PC-3 (cell line): ENCODE measurements at regions of chr1 and their contacts with region 1.

Region 1: GRCh38 chr1:45205910-45206721 is at the start of gene ZSWIM5:
- DNase-seq: peak; percentile 78
- ATAC-seq: peak; percentile 73
- H3K4me3 ChIP-seq: peak within 1 kb of the TSS; percentile 91
- H3K27ac ChIP-seq: no peak within 1 kb of the TSS
- H3K4me1 ChIP-seq: peaks cover 16% of the 10 kb centered on the region
- H3K27me3 ChIP-seq: no peaks in the 10 kb centered on the region
- CTCF ChIP-seq: no peak
- total RNA-seq, gene ZSWIM5: 1.4 and 1.6 TPM in 2 replicates

Region 2: DNA sequence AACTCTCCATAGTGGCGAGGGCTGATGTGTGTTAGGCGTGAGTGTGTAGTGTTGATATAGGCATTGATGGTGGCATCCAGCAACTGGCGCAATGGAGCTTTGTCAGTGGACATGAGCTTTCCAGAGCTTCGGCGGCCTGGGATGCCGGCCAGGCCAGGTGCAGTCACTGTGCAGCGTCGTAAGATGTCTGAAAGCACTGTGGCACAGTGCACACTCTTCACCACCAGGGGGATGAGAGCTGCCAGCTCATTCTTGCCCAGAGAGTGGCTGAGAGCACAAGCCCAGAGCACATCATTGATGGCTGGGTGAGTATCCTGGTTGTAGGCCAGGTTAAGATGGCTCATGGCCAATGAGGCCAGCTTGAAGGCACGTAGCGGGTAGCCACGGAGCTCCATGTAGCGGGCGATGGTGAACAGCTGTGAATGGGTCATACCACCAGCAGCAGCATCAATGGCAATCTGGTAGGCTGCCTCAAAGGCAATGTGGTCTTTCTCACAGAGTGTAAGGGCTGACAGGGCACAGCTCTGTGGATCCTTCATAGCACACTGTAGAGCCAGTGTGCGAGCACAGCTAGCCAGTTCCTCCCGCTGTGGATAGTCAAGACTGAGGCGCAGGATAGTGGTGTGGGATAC is 187.4 kb before region 1 on chr1:
- CTCF ChIA-PET with region 1: no interaction called
- POLR2A ChIA-PET with region 1: no interaction called
- intact Hi-C with region 1: loop called (anchors 1 kb)
- DNase-seq: peak; percentile 87
- ATAC-seq: peak; percentile 94
- H3K4me3 ChIP-seq: no peak overlapping the region
- H3K27ac ChIP-seq: no peak overlapping the region
- H3K4me1 ChIP-seq: 0 out of 2 replicates have a peak, but pooled peaks cover 2% of the 10 kb centered on the region
- H3K27me3 ChIP-seq: no peaks in the 10 kb centered on the region
- CTCF ChIP-seq: peak; percentile 84

Region 3: GRCh38 chr1:45172024-45172423 is 34.1 kb before region 1 on chr1:
- CTCF ChIA-PET with region 1: no interaction called
- POLR2A ChIA-PET with region 1: no interaction called
- intact Hi-C with region 1: loop called (anchors 2 kb)
- DNase-seq: peak; percentile 89
- ATAC-seq: peak; percentile 87
- H3K4me3 ChIP-seq: no peak overlapping the region; the same call in 1 of the 2 replicates
- H3K27ac ChIP-seq: no peak overlapping the region
- H3K4me1 ChIP-seq: peaks cover 24% of the 10 kb centered on the region
- H3K27me3 ChIP-seq: no peaks in the 10 kb centered on the region
- CTCF ChIP-seq: no peak